ENCODE measurements at regions of chr19 and their contacts with region 1.

Region 1: DNA sequence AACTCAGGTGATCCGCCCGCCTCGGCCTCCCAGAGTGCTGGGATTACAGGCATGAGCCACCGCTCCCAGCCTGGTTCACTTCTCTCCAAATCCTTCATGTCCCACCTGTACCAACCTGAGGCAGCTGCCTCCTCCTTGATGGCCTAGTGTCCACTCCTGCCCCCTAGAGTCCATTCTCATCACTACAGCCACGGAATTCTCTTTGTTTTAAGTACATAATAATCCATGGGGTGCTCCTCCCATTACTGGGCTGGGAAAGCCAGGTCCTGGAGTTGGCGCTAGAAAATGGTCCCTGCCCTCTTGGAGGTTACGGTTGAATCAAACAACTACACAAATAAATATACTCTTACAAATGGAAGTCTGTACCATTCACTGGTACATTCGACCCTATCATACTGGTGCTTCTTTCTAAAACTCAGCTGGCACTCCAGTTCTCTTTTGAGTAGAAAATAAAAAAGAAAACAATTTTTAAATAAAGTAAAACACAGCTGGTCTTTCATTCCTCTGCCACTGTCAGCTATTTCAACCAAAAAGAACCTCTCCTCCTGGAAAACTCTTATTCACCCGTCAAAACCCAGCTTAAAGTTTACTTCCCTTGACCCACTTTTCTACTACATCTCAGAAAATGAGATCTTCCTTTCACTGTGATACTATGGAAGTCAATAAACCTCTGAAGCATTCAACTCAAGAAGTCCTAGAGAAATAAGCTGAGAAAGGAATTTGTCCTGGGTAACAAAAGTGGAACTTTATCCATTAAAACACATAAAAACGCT is 22.4 kb upstream of the ARHGEF18 start:
- DNase-seq: peak; percentile 60
- ATAC-seq: no peak
- H3K4me3 Mint-ChIP-seq: no peak overlapping the region
- H3K27ac Mint-ChIP-seq: no peak overlapping the region
- H3K4me1 Mint-ChIP-seq: no peaks in the 10 kb centered on the region
- H3K27me3 Mint-ChIP-seq: peaks cover 6% of the 10 kb centered on the region

Region 2: DNA sequence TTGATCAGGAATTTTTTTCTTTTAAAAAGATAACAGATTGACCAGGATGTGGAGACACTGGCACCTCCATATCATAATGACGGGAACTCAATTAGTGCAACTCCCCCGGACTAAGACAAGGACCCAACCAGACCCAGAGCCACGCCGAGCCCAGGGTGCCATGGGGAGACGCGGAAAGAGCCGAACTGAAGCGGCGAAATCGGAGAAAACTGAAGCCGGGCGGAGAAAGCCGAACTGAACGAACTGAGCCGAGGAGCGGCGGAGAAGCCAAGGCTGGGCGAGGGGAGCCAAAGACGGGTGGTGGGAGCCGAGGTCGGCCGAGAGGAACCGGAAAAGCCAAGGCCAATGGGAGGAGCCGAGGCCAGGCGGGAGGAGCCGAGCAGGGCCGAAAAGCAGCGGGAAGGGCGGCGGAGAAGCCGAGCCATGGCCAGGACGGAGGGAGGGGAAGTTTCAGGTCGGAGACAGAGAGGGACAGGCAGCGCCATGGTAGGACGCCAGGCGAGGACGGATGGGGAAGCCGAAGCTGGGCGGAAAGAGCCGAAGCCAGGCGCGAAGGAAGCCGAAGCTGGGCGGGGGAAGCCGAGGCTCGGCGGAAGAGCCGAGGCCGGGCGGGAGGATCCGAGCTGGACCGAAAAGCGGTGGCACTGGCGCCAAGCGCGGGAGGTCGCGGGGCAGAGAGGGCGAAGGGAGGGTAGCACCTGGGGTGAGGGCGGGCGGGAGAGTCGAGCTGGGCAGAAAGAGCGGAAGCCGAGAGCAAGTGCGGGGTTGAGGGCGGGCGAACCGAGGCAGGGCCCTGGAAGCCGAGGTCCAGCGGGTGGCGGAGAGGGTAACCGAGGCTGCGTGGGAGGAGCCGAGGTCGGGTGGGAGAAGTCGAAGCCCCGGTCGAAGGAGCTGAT is 227.3 kb before region 1 on chr19:
- CTCF ChIA-PET with region 1: interaction called, 17 read pairs
- DNase-seq: peak; percentile 92
- ATAC-seq: peak; percentile 95
- H3K4me3 Mint-ChIP-seq: peak overlapping the region; percentile 98
- H3K27ac Mint-ChIP-seq: peak overlapping the region; percentile 95
- H3K4me1 Mint-ChIP-seq: peaks cover 27% of the 10 kb centered on the region
- H3K27me3 Mint-ChIP-seq: peaks cover 4% of the 10 kb centered on the region

Region 3: DNA sequence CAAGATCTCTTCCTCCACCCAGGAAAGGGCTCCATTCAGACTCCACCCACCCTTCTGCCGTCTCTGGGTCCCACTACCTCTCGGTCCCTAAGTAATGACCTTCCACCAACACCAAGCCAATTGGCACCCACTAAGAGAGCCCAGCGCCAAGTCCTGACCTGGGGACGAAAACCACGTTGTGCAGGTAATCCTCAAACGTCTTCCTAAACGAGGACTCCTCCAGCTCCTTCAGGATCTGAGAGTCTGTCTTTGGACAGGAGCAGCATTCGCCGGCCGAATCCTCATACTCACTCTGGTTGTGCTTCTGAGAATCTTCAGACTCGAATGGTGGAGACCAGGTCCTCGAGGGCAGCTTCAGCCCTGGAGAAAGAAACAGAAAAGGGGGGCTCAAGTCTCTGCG is 173.7 kb before region 1 on chr19:
- CTCF ChIA-PET with region 1: interaction called, 16 read pairs
- DNase-seq: peak; percentile 42
- ATAC-seq: peak; percentile 60
- H3K4me3 Mint-ChIP-seq: no peak overlapping the region
- H3K27ac Mint-ChIP-seq: peak overlapping the region; percentile 19
- H3K4me1 Mint-ChIP-seq: peaks cover under 1% of the 10 kb centered on the region
- H3K27me3 Mint-ChIP-seq: no peaks in the 10 kb centered on the region

Region 4: DNA sequence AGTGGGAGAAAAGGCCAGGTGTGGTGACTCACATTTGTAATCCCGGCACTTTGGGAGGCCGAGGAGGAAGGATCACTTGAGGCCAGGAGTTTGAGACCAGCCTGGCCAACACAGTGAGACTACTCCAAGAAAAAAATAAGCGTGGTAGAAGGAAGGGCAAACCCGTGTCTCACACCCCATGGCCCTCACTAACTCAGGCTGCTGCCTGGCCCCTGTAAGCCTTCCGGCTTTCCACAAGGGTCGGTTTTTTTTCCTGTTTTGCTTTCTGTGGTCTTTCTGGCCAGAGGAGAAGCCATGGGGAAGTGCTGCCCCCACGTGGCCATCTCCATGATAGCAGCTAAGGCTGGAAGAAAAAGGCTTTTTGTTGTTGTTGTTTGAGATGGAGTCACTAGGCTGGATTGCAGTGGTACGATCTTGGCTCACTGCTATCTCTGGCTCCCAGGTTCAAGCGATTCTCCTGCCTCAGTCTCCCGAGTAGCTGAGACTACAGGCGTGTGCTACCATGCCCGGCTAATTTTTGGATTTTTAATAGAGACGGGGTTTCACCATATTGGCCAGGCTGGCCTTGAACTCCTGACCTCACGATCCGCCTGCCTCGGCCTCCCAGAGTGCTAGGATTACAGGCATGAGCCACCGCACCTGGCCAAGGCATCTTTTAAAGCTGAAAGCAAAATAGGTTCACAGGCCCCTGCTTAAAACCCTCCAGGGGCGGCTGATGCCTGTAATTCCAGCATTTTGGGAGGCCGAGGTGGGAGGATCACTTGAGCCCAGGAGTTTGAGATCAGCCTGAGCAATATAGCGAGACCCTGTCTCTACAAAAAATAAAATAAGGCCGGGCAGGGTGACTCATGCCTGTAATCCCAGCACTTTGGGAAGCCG is 14.9 kb after region 1 on chr19:
- CTCF ChIA-PET with region 1: interaction called, 25 read pairs
- DNase-seq: peak; percentile 88
- ATAC-seq: peak; percentile 18
- H3K4me3 Mint-ChIP-seq: no peak overlapping the region
- H3K27ac Mint-ChIP-seq: peak overlapping the region; percentile 80
- H3K4me1 Mint-ChIP-seq: peaks cover 62% of the 10 kb centered on the region
- H3K27me3 Mint-ChIP-seq: no peaks in the 10 kb centered on the region

Measured in activated CD8-positive, alpha-beta memory T cell treated with anti-CD3 and anti-CD28 coated beads, Interleukin-2, amount 10 ng/mL, durations not matched to agents 7 days and 5 days (primary cell).